Mammary epithelial cell (primary cell): ENCODE measurements at regions of chr11 and their contacts with region 1.

Region 1: GRCh38 chr11:67178878-67179277 is 59.8 kb downstream of the KDM2A start:
- DNase-seq: no peak
- H3K4me3 ChIP-seq: no peak overlapping the region
- H3K27ac ChIP-seq: no peak overlapping the region
- H3K4me1 ChIP-seq: no peaks in the 10 kb centered on the region
- H3K27me3 ChIP-seq: no peaks in the 10 kb centered on the region
- CTCF ChIP-seq: no peak

Region 2: DNA sequence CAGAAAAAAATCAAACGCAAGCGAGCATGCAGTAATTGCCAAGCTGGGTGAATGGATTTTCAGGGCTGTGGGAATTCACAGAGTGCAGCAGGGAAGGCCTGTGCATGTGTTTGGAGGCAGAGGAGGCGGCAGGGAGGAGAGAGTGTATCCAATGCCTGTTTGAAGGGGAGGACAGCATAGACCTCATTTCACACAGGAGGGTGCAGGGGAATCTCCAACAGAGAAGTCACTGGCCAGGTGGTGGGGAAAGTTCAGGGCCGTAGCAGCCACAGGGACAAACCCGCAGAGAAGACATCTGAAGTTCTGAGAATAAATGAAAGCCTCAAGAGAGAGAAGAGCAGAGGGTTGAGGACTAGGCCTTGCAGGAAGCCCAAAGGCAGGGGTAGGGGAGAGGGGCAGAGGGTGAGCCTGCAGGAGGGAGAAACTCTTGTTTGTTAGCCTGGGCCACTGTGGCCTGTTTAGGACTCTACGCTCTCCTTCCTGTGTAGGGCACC is 79.0 kb before region 1 on chr11:
- CTCF ChIA-PET with region 1: no interaction called
- dilution Hi-C with region 1: loop called (anchors 5 kb)
- in situ Hi-C with region 1: no loop called
- intact Hi-C with region 1: no loop called
- DNase-seq: no peak
- H3K4me3 ChIP-seq: no peak overlapping the region
- H3K27ac ChIP-seq: no peak overlapping the region
- H3K4me1 ChIP-seq: peaks cover 8% of the 10 kb centered on the region
- H3K27me3 ChIP-seq: no peaks in the 10 kb centered on the region
- CTCF ChIP-seq: no peak

Region 3: GRCh38 chr11:67126986-67127385 is 51.9 kb before region 1 on chr11:
- CTCF ChIA-PET with region 1: no interaction called
- dilution Hi-C with region 1: loop called (anchors 5 kb)
- in situ Hi-C with region 1: no loop called
- intact Hi-C with region 1: no loop called
- DNase-seq: no peak
- H3K4me3 ChIP-seq: no peak overlapping the region
- H3K27ac ChIP-seq: no peak overlapping the region
- H3K4me1 ChIP-seq: peaks cover 2% of the 10 kb centered on the region
- H3K27me3 ChIP-seq: no peaks in the 10 kb centered on the region
- CTCF ChIP-seq: no peak